ENCODE measurements at regions of chr5 and their contacts with region 1.

Region 1: GRCh38 chr5:131303537-131303936 is 39.7 kb downstream of the CDC42SE2 start:
- DNase-seq: no peak
- ATAC-seq: no peak
- H3K4me3 Mint-ChIP-seq: no peak overlapping the region
- H3K27ac Mint-ChIP-seq: no peak overlapping the region
- H3K4me1 Mint-ChIP-seq: peaks cover 64% of the 10 kb centered on the region
- H3K27me3 Mint-ChIP-seq: no peaks in the 10 kb centered on the region
- CTCF ChIP-seq: no peak

Region 2: DNA sequence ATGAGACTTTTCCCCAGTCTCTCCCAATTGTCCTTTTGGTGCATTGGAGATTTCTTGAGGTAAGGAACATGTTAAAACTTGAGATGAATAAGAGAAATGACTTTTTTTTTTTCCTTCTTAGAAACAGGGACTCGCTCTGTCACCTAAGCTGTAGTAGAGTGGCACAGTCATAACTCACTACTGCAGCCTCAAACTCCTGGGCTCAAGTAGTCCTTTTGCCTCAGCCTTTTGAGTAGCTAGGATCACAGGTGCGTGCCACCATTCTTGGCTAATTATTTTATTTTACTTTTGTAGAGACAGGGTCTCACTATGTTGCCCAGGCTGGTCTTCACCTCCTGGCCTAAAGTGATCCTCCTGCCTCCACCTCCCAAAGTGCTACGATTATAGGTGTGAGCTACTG is 13.8 kb before region 1 on chr5:
- CTCF ChIA-PET with region 1: no interaction called
- POLR2A ChIA-PET with region 1: interaction called, 5 read pairs
- intact Hi-C with region 1: loop called (anchors 2 kb)
- DNase-seq: no peak
- ATAC-seq: peak; percentile 55
- H3K4me3 Mint-ChIP-seq: peak overlapping the region; percentile 24
- H3K27ac Mint-ChIP-seq: peak overlapping the region; percentile 84
- H3K4me1 Mint-ChIP-seq: peaks cover 64% of the 10 kb centered on the region
- H3K27me3 Mint-ChIP-seq: no peaks in the 10 kb centered on the region
- CTCF ChIP-seq: no peak

Measured in activated B cell treated with CpG ODN at 0.5 μM for 24 hours (primary cell).